Activated CD4-positive, alpha-beta T cell treated with anti-CD3 and anti-CD28 coated beads for 36 hours (primary cell): ENCODE measurements at regions of chr2 and their contacts with region 1.

Region 1: DNA sequence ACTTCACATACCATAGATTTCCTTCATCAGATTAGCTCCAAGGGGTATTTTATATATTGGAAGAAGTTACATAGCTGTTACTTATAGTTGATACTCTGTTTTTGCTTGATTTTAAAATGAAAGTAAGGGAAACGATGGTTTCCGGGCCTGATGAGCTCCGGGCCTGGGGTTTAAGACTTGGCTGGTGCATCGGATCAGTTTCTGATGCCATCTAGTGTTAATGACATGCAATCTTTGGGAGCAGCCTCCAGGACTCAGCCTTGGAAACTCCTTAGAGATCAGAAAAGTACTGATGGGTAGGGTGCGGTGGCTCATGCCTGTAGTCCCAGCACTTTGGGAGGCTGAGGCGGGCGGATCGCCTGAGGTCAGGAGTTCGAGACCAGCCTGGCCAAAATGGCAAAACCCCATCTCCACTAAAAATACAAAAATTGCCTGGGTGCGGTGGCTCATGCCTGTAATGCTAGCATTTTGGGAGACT is 47.1 kb upstream of the CNOT11 start:
- DNase-seq: peak; percentile 71
- ATAC-seq: peak; percentile 99
- H3K4me3 Mint-ChIP-seq: peak overlapping the region; percentile 43
- H3K27ac Mint-ChIP-seq: peak overlapping the region; percentile 38
- H3K4me1 Mint-ChIP-seq: peaks cover 4% of the 10 kb centered on the region
- H3K27me3 Mint-ChIP-seq: no peaks in the 10 kb centered on the region

Region 2: DNA sequence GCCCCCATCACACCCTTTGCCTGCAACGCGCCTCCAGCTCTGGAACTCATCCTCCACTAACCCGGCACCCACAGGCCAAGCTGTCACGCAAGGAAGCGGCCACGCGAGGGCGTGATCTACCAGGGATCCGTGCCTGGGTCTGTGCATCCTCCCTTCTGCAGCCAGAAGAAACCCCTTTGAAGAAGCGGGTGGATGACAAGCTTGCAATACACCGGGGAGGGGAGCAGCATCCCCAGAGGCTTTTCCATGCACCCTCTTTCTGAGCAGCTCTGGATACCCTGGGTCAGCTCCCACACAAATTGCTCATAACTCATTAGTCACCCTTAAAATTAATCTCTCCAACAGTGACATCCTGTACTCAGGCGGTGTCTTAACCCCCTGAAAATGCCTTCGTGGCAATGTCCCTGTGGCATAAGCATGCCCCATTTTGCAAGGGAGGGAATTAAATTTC is 595.2 kb before region 1 on chr2:
- CTCF ChIA-PET with region 1: interaction called, 10 read pairs
- POLR2A ChIA-PET with region 1: no interaction called
- intact Hi-C with region 1: loop called in 1 of 2 experiments (anchors 1 kb)
- DNase-seq: peak; percentile 88
- ATAC-seq: peak; percentile 91
- H3K4me3 Mint-ChIP-seq: no peak overlapping the region
- H3K27ac Mint-ChIP-seq: no peak overlapping the region
- H3K4me1 Mint-ChIP-seq: no peaks in the 10 kb centered on the region
- H3K27me3 Mint-ChIP-seq: no peaks in the 10 kb centered on the region

Region 3: DNA sequence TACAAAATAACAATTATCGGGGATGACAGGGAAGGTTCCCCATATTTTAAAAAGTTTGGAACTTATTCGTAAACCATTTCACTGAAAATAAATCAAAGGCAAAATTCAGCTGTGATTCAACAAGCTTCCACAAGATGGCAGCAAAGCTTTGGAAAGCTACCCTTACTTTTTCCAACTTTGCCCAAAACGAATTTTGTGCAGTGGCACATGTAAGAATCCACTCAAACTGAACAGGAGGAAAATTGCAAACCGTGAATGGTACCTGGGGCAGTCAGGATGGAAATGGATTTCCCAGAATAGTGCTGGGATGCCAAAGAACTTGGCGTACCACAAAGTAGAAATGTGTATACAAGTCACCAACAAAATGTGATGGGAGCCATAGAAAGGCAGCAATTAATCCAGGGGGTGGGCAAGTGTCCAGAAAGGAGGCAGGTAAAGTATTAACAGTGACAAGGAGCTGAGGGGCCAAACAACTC is 192.8 kb before region 1 on chr2:
- CTCF ChIA-PET with region 1: interaction called, 61 read pairs
- POLR2A ChIA-PET with region 1: no interaction called
- intact Hi-C with region 1: loop called (anchors 1 kb)
- DNase-seq: peak; percentile 49
- ATAC-seq: no peak
- H3K4me3 Mint-ChIP-seq: no peak overlapping the region
- H3K27ac Mint-ChIP-seq: peak overlapping the region; percentile 55
- H3K4me1 Mint-ChIP-seq: peaks cover 31% of the 10 kb centered on the region
- H3K27me3 Mint-ChIP-seq: no peaks in the 10 kb centered on the region

Region 4: DNA sequence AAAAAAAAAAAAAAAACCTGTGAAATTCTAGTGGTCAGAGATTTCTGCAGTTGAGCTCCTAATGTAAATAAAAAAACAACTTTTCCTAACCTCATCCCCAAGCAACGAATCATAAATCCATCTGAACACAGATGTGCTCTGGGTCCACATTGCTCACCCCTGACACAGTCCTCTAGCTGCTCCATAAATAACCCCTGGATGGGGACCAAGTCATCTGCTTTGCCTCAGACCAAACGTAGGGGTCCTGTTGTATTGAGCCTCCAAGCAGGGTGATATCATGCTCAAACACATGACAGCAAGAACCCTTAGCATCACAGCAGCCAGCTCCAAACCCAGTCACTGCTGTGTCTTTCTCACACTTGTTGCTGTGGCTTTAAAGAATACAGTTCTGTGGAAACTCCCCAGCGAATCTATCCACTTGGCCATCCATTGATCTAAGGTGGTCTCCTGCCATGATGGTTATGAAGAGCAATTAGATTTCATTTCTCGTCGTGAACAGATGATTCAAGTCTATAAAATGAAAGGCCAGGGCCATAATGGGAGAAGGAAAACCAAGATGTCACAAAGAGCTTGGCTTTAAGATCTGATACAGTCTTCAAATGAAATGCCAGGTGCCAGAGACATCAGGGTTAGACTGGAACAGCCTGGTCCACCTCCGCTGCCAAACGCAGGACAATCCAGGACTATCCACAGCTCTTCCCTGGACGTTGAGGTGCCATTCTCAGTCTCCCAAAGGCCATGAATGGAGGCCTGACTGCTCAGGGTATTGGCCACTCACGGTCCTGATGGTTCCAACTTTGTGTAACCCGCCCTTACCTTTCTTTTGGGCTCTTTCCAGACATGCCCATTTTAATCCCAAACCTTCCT is 93.4 kb before region 1 on chr2:
- CTCF ChIA-PET with region 1: no interaction called
- POLR2A ChIA-PET with region 1: no interaction called
- intact Hi-C with region 1: no loop called
- DNase-seq: no peak
- ATAC-seq: no peak
- H3K4me3 Mint-ChIP-seq: no peak overlapping the region
- H3K27ac Mint-ChIP-seq: no peak overlapping the region
- H3K4me1 Mint-ChIP-seq: peaks cover 6% of the 10 kb centered on the region
- H3K27me3 Mint-ChIP-seq: no peaks in the 10 kb centered on the region

Region 5: DNA sequence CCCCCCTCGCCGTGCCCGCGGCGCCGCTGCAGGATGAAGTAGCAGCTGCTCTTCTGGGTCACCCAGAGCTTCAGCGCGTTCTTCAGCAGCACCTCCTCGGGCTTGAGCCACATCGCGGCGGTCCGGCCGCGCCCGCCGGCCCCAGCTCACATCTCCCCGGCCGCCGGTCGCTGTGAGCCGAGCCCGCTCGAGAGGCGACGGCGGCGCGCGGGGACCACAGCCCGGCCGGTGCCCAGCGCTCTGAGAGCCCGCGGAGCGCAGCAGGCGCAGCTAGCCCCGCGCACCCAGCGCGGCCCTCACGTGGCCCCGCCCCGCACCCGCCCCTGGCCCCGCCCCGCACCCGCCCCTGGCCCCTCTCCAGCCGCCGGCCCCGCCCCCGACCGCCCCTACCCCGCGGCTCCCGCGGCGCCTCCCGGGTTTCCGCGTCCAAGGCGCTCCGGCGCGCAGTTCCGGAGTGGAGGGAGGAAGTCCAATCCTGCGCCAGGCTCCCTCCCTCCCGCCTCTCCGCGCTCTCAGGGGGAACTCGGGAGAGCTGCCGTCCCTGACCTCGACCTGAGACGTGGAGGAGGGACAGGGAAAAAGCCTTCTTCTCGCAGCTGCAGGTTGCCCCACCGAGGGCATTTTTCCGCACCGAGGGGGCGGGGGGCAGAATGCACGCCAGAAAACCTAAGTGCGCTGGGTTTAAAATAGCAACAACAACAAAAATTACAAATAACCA is 54.3 kb before region 1 on chr2 and contains the start of gene TBC1D8:
- CTCF ChIA-PET with region 1: interaction called, 9 read pairs
- POLR2A ChIA-PET with region 1: no interaction called
- intact Hi-C with region 1: loop called in 1 of 2 experiments (anchors 2 kb)
- DNase-seq: peak; percentile 82
- ATAC-seq: peak; percentile 93
- H3K4me3 Mint-ChIP-seq: peak within 1 kb of the TSS; percentile 71
- H3K27ac Mint-ChIP-seq: peak within 1 kb of the TSS; percentile 55
- H3K4me1 Mint-ChIP-seq: peaks cover 24% of the 10 kb centered on the region
- H3K27me3 Mint-ChIP-seq: peaks cover 21% of the 10 kb centered on the region
- total RNA-seq, gene TBC1D8: 3.3 to 3.4 TPM

Region 6: DNA sequence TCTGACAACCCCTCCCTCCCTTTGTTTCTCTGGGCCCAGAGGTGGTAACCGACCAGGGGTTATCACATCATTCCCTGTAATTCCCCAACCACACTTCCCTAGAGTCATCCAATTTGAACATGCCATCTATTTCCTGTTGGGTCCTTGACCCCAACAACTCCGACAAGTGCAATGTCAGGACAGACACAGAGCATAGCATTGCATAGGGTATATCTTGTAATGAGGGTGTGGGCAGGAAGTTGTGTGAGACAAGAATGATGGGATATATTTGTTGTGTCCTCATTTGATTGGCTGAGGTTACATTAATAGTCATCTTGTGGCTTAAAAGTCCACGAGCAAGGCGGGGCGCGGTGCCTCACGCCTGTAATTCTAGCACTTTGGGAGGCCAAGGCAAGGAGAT is 13.7 kb after region 1 on chr2:
- CTCF ChIA-PET with region 1: interaction called, 19 read pairs
- POLR2A ChIA-PET with region 1: no interaction called
- intact Hi-C with region 1: no loop called
- DNase-seq: no peak
- ATAC-seq: no peak
- H3K4me3 Mint-ChIP-seq: no peak overlapping the region
- H3K27ac Mint-ChIP-seq: no peak overlapping the region
- H3K4me1 Mint-ChIP-seq: peaks cover 9% of the 10 kb centered on the region
- H3K27me3 Mint-ChIP-seq: no peaks in the 10 kb centered on the region